ENCODE measurements at regions of chr1 and their contacts with region 1.

Region 1: DNA sequence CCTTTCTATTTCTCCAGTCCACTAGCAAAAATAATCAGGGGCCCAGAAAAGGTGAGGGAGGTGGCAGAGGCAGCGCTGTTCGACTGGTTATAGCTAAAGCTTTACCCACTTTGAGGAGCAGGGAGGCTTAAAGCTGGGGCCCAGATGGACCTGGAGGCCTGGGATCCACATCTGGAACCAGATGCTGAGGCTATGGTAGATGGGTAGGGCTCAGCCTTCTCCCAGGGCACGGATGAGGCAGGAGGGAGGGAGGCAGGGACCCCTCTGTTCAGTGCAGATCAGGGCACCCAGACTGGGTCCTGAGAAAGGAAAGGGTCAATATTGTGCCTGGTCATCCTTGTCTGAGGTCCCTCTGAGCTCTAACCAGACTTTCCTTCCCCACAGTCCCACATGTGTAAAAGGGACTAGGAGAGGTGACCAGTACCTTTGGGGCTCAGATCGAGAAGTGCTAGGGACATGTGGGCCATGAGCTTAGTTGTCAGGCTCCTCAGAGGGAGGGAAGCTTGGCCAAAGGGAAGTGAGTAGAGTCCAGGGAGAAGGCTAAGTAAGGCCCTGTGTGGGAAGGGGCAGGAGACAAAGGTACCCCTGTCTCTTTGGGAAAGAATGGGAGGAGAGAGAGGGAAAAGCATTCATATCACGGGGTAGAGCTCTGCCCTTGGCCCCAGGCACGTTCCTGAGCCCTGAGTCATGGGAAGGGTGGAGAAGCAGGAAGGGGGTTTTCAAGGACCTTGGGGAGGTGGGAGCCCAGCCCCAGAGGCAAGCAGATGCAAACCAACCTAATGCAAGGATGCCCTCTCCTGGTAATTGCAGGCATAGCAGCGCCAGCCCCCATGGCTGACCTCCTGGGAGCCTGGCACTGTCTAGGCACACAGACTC is 15.4 kb downstream of the LMNA start:
- DNase-seq: peak; percentile 93
- H3K4me3 Mint-ChIP-seq: no peak overlapping the region
- H3K27ac Mint-ChIP-seq: no peak overlapping the region
- H3K4me1 Mint-ChIP-seq: peaks cover 50% of the 10 kb centered on the region
- H3K27me3 Mint-ChIP-seq: peaks cover 4% of the 10 kb centered on the region

Region 2: GRCh38 chr1:156090822-156091188 is 39.1 kb before region 1 on chr1:
- CTCF ChIA-PET with region 1: interaction called, 737 read pairs
- intact Hi-C with region 1: loop called (anchors 1 kb)
- DNase-seq: peak; percentile 95
- H3K4me3 Mint-ChIP-seq: no peak overlapping the region
- H3K27ac Mint-ChIP-seq: no peak overlapping the region
- H3K4me1 Mint-ChIP-seq: peaks cover 7% of the 10 kb centered on the region
- H3K27me3 Mint-ChIP-seq: peaks cover 19% of the 10 kb centered on the region

Region 3: GRCh38 chr1:156104065-156104810 is 25.7 kb before region 1 on chr1:
- CTCF ChIA-PET with region 1: interaction called, 737 read pairs
- intact Hi-C with region 1: loop called (anchors 1 kb)
- DNase-seq: peak; percentile 48
- H3K4me3 Mint-ChIP-seq: no peak overlapping the region
- H3K27ac Mint-ChIP-seq: peak overlapping the region; percentile 63
- H3K4me1 Mint-ChIP-seq: peaks cover 61% of the 10 kb centered on the region
- H3K27me3 Mint-ChIP-seq: peaks cover 16% of the 10 kb centered on the region

Region 4: DNA sequence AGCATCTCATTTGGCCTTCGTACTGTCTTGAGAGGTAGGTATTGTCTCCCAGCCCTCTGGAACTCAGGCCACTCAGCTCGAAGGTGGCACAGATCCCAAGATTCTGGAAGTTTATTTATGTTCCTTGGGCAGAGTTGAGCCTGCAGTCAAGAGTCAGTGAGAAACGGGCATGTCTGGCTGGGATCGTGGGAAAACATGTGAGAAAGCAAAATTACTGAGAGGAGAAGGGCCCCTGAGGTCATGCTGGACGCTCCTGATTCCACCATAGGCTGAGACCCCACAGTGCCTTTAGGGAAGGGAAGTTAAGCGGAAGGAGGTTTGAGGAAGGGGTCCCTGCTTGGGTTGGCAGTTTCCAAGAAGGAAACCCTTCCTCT is 10.9 kb after region 1 on chr1:
- CTCF ChIA-PET with region 1: interaction called, 24 read pairs
- intact Hi-C with region 1: no loop called
- DNase-seq: no peak
- H3K4me3 Mint-ChIP-seq: no peak overlapping the region
- H3K27ac Mint-ChIP-seq: no peak overlapping the region
- H3K4me1 Mint-ChIP-seq: peaks cover 4% of the 10 kb centered on the region
- H3K27me3 Mint-ChIP-seq: no peaks in the 10 kb centered on the region

Region 5: DNA sequence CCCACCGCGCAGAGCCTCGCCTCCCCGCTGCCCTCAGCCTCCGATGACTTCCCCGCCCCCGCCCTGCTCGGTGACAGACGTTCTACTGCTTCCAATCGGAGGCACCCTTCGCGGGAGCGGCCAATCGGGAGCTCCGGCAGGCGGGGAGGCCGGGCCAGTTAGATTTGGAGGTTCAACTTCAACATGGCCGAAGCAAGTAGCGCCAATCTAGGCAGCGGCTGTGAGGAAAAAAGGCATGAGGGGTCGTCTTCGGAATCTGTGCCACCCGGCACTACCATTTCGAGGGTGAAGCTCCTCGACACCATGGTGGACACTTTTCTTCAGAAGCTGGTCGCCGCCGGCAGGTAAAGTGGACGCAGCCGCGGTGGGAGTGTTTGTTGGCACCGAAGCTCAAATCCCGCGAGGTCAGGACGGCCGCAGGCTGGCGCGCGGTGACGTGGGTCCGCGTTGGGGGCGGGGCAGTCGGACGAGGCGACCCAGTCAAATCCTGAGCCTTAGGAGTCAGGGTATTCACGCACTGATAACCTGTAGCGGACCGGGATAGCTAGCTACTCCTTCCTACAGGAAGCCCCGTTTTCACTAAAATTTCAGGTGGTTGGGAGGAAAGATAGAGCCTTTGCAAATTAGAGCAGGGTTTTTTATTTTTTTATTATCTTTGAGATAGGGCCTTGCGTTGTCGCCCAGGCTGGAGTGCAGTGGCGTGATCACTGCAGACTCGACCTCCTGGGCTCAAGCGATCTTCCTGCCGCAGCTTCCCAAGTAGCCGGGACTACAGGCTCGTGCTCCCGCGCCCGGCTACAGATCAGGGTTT is 83.1 kb after region 1 on chr1 and contains the start of gene PMF1:
- CTCF ChIA-PET with region 1: interaction called, 4 read pairs
- intact Hi-C with region 1: loop called (anchors 1 kb)
- DNase-seq: peak; percentile 99
- H3K4me3 Mint-ChIP-seq: peak within 1 kb of the TSS; percentile 79
- H3K27ac Mint-ChIP-seq: peak within 1 kb of the TSS; percentile 97
- H3K4me1 Mint-ChIP-seq: peaks cover 46% of the 10 kb centered on the region
- H3K27me3 Mint-ChIP-seq: no peaks in the 10 kb centered on the region
- total RNA-seq, gene PMF1: 135 TPM

Region 6: DNA sequence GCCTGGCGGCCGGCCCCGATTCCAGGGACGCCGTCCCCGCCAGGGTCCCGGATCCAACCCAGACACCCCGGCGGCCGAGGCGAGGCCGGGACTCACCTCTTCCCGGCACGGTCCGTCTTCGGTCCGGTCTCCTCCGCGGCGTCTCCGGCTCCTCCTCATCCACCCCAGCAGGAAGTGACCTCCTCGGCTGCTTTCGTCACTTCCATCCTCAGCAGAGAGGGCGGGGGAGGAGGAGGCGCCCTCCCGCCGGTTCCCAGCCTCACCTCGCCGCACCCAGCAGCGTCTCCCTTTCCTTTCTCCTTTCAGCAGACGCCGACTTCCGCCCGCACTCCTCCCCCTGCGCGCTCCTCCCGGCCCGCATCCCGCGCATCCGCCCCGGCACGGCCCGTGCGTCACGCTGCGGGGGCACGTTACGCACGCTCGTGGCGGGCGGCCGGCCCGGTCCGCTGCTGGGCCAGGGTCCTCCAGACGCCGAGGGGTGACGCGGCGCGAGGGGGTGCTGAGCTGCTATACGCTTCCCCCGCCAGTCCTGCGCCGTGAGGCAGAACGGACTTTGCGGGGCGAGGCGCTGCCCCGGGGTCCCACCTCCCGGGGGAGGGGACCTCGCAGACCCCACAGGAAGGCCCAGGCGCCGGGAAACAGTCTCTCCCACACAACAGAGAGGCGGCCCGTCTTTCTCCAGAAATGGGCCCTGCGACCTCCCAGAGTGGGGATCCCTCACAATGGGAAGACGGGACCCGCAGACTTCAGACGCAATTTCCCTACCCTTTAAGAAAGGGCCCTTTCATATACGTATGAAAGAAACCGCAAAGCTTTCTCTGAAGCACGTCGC is 1008.5 kb after region 1 on chr1 and contains the start of gene ETV3:
- CTCF ChIA-PET with region 1: no interaction called
- intact Hi-C with region 1: no loop called
- DNase-seq: peak; percentile 95
- H3K4me3 Mint-ChIP-seq: peak within 1 kb of the TSS; percentile 96
- H3K27ac Mint-ChIP-seq: peak within 1 kb of the TSS; percentile 85
- H3K4me1 Mint-ChIP-seq: peaks cover 56% of the 10 kb centered on the region
- H3K27me3 Mint-ChIP-seq: no peaks in the 10 kb centered on the region
- total RNA-seq, gene ETV3: 23.2 to 23.3 TPM

Measured in activated naive CD4-positive, alpha-beta T cell treated with anti-CD3 and anti-CD28 coated beads for 36 hours (primary cell).